Activated B cell treated with CpG ODN at 0.5 μM for 24 hours (primary cell): ENCODE measurements at regions of chr2 and their contacts with region 1.

Region 1: DNA sequence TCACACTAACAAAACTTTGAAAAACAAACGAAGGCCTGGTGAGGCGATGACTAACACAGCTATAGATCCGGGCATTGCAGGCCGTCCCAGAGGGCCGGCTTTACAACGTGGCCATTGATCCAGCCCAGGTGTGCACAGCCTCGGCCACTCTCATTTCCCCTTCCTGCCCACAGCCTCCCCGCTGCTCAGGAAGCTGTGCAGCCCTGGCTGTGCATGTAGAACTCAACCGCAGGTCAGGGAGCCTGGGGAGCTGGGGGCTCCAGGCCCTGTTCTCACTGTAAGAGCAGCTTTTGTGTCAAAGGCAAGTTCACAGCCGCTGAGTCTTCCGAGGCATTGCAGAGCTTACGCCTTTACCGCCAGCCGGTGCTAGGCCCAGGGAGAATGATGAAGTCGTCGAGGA is 87.2 kb downstream of the LONRF2 start:
- DNase-seq: peak; percentile 67
- ATAC-seq: peak; percentile 93
- H3K4me3 Mint-ChIP-seq: peak overlapping the region; percentile 58
- H3K27ac Mint-ChIP-seq: peak overlapping the region; percentile 86
- H3K4me1 Mint-ChIP-seq: peaks cover 76% of the 10 kb centered on the region
- H3K27me3 Mint-ChIP-seq: no peaks in the 10 kb centered on the region
- CTCF ChIP-seq: no peak

Region 2: GRCh38 chr2:100104718-100105677 is 130.1 kb before region 1 on chr2:
- CTCF ChIA-PET with region 1: interaction called, 3 read pairs
- POLR2A ChIA-PET with region 1: interaction called, 16 read pairs
- intact Hi-C with region 1: no loop called
- DNase-seq: peak; percentile 50
- ATAC-seq: peak; percentile 62
- H3K4me3 Mint-ChIP-seq: peak overlapping the region; percentile 89
- H3K27ac Mint-ChIP-seq: peak overlapping the region; percentile 91
- H3K4me1 Mint-ChIP-seq: peaks cover 44% of the 10 kb centered on the region
- H3K27me3 Mint-ChIP-seq: no peaks in the 10 kb centered on the region
- CTCF ChIP-seq: no peak

Region 3: DNA sequence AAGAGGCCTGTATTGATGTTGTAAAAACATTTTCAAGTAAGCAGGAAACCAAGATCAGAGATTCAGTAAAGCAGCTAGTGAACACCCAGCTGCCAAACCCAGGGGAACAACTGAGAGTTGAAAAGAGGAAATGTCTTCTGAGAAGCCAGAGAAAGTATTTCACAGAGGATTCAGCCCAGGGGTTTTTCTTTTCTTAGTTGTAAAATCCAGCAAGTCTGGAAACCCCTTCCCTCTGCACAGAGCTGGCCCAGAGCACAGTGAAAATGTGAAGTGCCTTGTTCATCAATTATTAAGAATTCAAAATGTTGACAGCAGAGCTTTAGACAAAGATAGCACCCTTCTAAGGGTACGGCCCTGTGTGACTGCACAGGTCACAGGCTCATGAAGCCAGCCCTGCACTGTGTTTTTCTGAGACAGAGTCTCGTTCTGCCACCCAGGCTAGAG is 121.1 kb before region 1 on chr2:
- CTCF ChIA-PET with region 1: interaction called, 3 read pairs
- POLR2A ChIA-PET with region 1: interaction called, 20 read pairs
- intact Hi-C with region 1: loop called (anchors 2 kb)
- DNase-seq: peak; percentile 26
- ATAC-seq: peak; percentile 72
- H3K4me3 Mint-ChIP-seq: peak overlapping the region; percentile 71
- H3K27ac Mint-ChIP-seq: peak overlapping the region; percentile 88
- H3K4me1 Mint-ChIP-seq: peaks cover 82% of the 10 kb centered on the region
- H3K27me3 Mint-ChIP-seq: no peaks in the 10 kb centered on the region
- CTCF ChIP-seq: no peak

Region 4: DNA sequence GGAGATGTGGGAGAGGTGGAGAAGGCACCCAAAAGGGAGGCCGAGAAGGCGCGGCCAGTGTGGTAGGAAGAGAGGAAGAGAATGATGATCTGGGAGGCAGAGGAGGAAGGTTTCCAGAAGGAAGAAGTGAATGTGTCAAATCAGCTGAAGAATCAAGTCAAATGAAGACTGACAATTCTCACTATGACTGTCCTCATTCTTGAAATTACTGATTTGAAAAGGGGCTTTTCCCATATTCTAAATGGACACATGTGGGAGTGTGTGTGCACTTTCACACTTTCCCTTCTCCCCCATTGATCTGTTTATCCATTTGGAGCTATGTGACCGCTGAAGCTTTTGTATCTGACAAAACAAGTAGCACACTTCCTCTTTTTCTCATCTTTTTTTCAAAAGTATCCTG is 98.8 kb before region 1 on chr2:
- CTCF ChIA-PET with region 1: interaction called, 3 read pairs
- POLR2A ChIA-PET with region 1: interaction called, 122 read pairs
- intact Hi-C with region 1: no loop called
- DNase-seq: no peak
- ATAC-seq: peak; percentile 33
- H3K4me3 Mint-ChIP-seq: no peak overlapping the region
- H3K27ac Mint-ChIP-seq: no peak overlapping the region
- H3K4me1 Mint-ChIP-seq: peaks cover 27% of the 10 kb centered on the region
- H3K27me3 Mint-ChIP-seq: no peaks in the 10 kb centered on the region
- CTCF ChIP-seq: no peak

Region 5: DNA sequence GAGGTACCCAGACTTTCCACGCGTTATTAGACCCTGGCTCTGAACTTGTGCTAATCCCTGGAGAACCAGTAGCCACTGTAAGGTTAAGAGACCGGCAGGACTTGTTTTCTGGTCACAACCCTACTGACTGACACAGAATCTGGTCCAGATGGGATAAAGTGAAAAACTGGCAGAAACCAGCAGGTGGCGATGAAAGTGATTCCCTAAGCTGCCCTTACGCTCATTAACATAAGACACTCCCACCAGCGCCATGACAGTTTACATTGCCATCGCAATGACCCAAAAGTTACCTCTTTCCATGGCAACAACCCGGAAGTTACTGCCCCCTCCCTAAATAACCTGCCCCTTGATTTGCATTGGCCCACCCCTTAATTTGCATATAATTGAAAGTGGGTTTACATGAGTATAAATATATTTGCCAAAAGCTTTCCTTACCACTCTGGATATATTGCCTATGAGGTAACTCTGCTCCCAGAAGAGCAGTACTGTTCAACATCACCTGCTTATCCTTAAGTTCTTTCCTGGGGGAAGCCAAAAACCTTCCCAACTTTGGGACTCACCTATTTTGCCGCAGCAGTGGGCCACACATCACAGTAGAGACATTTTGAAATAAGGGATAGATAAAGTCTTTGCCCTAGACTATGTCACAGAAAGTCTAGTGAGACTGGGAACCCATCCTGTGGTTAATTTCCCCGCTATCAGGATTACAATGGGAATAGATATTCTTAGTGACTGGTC is 56.9 kb before region 1 on chr2:
- CTCF ChIA-PET with region 1: no interaction called
- POLR2A ChIA-PET with region 1: no interaction called
- intact Hi-C with region 1: loop called (anchors 2 kb)
- DNase-seq: no peak
- ATAC-seq: peak; percentile 84
- H3K4me3 Mint-ChIP-seq: no peak overlapping the region
- H3K27ac Mint-ChIP-seq: peak overlapping the region; percentile 24
- H3K4me1 Mint-ChIP-seq: peaks cover 17% of the 10 kb centered on the region
- H3K27me3 Mint-ChIP-seq: no peaks in the 10 kb centered on the region
- CTCF ChIP-seq: no peak